ENCODE measurements at regions of chr12 and their contacts with region 1.

Region 1: DNA sequence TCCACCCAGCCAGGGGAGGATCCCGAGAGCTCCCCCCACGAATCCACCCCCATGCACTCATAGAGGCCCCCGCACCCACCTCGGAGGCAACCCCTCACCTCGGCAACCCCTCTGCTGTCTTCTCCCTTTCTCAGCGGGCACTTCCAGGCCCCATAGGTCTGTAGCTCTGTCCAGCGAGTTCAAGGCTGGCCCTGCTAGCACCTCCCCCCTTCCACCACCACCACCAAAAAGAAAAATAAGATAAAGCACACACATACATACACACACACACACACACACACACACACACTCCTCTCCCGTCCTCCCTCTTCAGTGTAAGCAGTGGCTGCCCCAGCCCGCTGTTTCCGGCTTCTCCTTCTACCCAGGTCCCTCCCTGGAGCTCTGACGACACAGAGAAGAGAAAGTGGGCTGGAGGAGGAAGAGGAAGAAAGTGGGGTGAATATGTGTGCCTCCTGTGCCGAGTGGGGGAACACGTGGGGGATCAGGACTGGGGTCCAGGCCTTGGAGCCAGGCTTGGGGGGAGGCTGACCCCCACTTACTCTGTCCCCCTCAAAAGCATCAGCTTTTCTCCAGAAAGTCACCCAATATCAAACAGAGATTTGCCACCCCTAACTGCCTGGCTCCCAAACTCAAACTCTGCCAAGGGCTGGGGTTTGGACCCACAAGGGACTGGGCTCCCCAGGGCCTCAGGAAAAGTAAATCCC is at the start of gene STAT6:
- DNase-seq: no peak
- H3K4me3 ChIP-seq: peak within 1 kb of the TSS; percentile 73
- H3K27me3 ChIP-seq: no peaks in the 10 kb centered on the region
- CTCF ChIP-seq: no peak
- polyA plus RNA-seq, gene STAT6: 110 and 177 TPM in 2 replicates

Region 2: DNA sequence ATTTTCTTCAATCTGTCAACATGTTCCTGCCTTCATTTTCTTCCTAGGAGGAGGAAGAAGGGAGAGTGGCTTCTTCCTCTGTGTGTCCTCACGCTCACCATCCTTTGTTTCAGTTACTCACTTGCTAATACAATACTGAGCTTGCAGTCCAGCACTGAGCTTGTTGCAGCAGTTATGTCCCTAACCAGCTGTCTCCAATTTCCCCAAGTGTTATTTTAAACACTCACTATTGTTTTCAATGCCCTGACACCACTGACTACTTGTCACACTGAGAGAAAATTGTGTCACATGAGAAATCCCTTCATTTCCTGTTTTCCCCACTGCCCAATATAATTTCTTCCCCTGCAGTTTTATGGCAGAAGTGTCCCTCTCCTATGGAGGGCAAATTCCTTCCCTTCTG is 294.7 kb before region 1 on chr12:
- CTCF ChIA-PET with region 1: no interaction called
- POLR2A ChIA-PET with region 1: no interaction called
- DNase-seq: no peak
- H3K4me3 ChIP-seq: no peak overlapping the region
- H3K27me3 ChIP-seq: peaks cover 1% of the 10 kb centered on the region; the same call in 1 of the 2 replicates
- CTCF ChIP-seq: no peak

Region 3: DNA sequence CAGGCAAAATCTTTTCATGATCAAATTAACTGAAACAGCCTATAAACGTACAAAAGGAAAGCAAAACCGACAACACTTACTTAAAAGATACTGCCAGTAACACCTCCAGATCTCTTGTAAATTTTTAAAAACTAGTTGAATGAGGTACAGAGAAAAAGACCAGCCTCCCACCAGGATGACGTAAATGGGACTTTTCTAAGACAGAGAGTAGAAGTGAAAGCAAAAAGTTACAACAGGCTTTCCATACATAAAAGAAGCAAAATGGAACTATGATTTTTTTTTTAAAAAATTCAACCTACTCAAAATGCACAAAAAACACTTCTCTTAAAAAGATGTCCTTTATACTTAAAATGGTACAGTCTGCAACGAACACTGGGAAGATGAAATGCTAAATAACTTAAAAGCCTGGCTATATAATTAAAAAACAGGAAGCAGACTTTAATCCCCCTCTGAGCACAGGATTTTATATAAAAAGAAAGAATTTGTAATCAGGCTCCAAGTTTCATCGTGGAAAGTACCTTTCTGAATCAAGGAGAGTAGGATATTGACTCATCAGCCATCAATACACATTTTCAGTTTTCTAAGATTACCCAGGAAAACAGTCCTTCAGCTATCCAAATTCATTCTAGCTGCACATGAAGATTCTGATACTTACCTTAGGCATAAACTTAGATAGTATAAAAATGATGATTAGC is 47.0 kb before region 1 on chr12:
- CTCF ChIA-PET with region 1: interaction called, 199 read pairs
- POLR2A ChIA-PET with region 1: interaction called, 8 read pairs
- DNase-seq: no peak
- H3K4me3 ChIP-seq: no peak overlapping the region
- H3K27me3 ChIP-seq: no peaks in the 10 kb centered on the region
- CTCF ChIP-seq: no peak

Region 4: GRCh38 chr12:57078519-57079404 is 32.4 kb before region 1 on chr12 and contains the start of gene NEMP1:
- CTCF ChIA-PET with region 1: interaction called, 199 read pairs
- POLR2A ChIA-PET with region 1: no interaction called
- DNase-seq: peak; percentile 100
- H3K4me3 ChIP-seq: peak within 1 kb of the TSS; percentile 77
- H3K27me3 ChIP-seq: no peaks in the 10 kb centered on the region
- CTCF ChIP-seq: no peak
- polyA plus RNA-seq, gene NEMP1: 6.7 and 12.0 TPM in 2 replicates

Region 5: GRCh38 chr12:57124259-57124877 is 13.2 kb after region 1 on chr12:
- CTCF ChIA-PET with region 1: interaction called, 70 read pairs
- POLR2A ChIA-PET with region 1: interaction called, 11 read pairs
- DNase-seq: no peak
- H3K4me3 ChIP-seq: no peak overlapping the region
- H3K27me3 ChIP-seq: no peaks in the 10 kb centered on the region
- CTCF ChIP-seq: peak; percentile 97

Region 6: GRCh38 chr12:57135527-57136326 is 24.5 kb after region 1 on chr12:
- CTCF ChIA-PET with region 1: interaction called, 15 read pairs
- POLR2A ChIA-PET with region 1: interaction called, 20 read pairs
- DNase-seq: no peak
- H3K4me3 ChIP-seq: peak overlapping the region; percentile 33
- H3K27me3 ChIP-seq: no peaks in the 10 kb centered on the region
- CTCF ChIP-seq: no peak

Region 7: DNA sequence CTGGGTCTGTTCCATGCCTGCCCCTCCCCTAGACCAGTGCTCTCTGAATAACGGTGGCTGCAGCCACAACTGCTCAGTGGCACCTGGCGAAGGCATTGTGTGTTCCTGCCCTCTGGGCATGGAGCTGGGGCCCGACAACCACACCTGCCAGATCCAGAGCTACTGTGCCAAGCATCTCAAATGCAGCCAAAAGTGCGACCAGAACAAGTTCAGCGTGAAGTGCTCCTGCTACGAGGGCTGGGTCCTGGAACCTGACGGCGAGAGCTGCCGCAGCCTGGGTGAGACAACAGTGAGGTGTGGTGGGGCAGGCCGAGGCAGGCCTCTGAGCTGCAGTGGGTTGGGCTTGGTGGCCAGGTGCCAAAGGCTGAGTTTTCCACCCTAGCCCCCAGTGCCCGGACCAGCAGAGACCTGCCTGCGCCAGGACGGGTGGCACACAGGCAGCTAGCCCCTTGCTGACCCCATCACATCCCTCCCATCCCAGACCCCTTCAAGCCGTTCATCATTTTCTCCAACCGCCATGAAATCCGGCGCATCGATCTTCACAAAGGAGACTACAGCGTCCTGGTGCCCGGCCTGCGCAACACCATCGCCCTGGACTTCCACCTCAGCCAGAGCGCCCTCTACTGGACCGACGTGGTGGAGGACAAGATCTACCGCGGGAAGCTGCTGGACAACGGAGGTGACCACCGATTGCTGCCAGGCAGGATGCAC is 64.4 kb after region 1 on chr12:
- CTCF ChIA-PET with region 1: interaction called, 357 read pairs
- POLR2A ChIA-PET with region 1: no interaction called
- DNase-seq: no peak
- H3K4me3 ChIP-seq: no peak overlapping the region
- H3K27me3 ChIP-seq: no peaks in the 10 kb centered on the region
- CTCF ChIP-seq: peak; percentile 89

Region 8: DNA sequence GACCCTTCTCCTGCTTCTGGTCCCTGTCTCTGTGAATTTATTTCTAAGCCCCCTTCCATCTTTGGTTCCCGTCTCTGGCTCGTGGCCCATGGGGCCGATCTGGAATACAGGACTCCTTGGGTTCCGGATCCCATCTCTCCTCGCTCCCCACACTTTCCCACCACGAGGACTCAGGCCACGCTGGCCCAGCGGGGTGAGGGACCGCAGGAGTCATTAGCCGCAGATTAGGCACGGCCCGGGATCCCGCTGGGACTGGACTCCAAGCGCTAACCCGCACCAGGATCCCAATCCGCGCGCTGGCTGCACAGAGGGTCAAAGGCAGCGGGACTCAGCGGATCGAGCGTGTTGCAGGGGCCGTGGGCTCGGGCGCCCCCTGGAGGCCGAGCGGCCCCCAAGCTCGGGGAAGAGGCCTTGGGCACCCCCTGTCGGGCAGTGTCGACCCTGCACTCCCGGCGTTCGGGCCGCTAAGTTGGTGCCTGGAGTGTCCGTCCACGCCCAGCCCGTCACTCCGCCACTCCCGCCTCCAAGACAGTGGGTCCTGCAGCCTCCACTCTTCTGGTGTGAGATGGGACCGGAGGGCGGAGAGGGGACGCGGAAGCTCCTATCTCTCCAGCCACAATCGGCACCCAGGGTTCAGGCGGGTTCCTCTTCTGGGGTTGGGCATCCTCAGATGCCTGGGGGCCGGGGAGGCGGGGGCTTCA is 127.8 kb after region 1 on chr12:
- CTCF ChIA-PET with region 1: interaction called, 16 read pairs
- POLR2A ChIA-PET with region 1: no interaction called
- DNase-seq: peak; percentile 44
- H3K4me3 ChIP-seq: peak overlapping the region; percentile 60
- H3K27me3 ChIP-seq: no peaks in the 10 kb centered on the region; the same call in 1 of the 2 replicates
- CTCF ChIP-seq: peak; percentile 100